ENCODE measurements at regions of chr15 and their contacts with region 1.

Region 1: DNA sequence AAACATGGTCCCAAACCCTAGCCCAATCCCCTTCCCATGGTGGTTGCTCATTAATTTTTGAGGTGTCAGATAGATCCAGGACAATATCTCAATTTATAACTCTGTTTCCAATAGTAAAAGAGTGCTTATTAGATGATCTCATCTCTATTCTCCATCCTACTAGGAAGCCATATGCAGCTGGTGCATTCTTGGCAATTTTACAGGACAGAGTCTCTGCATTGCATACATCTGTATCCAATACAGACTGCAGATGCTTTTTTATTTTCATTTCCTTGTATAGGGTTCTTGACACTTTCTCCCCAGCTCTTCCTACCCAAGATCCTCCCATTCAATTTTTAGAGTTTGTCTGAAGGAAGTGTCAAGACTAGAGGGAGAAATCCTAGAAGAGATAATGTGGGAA is 194.8 kb upstream of the DPH6 start:
- DNase-seq: no peak
- ATAC-seq: no peak
- H3K4me3 ChIP-seq: no peak overlapping the region
- H3K27ac ChIP-seq: no peak overlapping the region
- H3K4me1 ChIP-seq: no peaks in the 10 kb centered on the region
- H3K27me3 ChIP-seq: no peaks in the 10 kb centered on the region

Region 2: DNA sequence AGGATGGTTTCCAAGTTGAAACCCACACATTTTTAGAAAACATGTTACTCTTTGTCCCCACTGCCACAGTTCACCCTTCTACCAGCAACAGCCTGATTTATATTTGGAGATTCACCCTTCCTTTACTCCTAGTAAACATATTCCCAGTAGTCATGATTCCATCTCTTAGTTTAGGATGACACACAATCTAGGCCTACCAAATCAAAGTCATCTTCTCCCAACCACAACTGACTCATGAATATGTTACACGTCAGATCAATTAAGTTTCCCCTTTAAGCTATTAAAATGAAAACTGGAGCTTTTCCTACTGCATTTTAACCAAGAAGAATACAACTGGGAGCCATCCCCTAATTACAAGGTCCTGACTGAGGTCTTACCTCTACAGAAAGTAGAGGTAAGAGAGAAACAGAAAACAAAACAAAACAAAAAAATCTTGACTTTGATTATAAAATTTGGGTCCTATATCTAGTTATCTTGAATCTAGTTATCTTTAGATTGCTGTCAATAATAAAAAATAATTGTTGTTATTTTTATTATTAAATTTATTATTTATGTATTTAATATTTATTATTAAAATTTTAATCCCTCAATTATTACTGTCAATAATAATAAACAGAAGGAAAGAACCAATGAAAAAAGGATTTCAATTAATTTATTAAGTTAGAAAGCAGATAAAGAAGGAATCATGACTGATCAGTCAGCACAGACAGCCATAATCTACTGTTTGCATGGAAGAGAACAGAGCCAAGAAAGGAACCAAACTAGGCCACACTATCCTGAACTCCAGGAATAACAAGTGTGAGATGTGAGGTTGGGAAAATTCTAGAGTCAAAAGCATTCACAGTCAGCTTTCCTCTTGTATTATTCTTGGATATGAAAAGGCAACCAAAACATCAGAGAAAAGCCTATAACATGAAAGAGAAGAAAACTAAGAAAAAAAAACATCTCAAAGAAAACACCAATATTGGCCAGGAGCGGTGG is 207.3 kb before region 1 on chr15:
- intact Hi-C with region 1: loop called in 1 of 4 experiments (anchors 10 kb)
- DNase-seq: no peak
- ATAC-seq: peak; percentile 57
- H3K4me3 ChIP-seq: no peak overlapping the region
- H3K27ac ChIP-seq: no peak overlapping the region
- H3K4me1 ChIP-seq: no peaks in the 10 kb centered on the region
- H3K27me3 ChIP-seq: no peaks in the 10 kb centered on the region

Region 3: GRCh38 chr15:35680951-35681350 is 59.8 kb before region 1 on chr15:
- intact Hi-C with region 1: no loop called
- DNase-seq: no peak
- ATAC-seq: no peak
- H3K4me3 ChIP-seq: no peak overlapping the region
- H3K27ac ChIP-seq: no peak overlapping the region
- H3K4me1 ChIP-seq: peaks cover 1% of the 10 kb centered on the region
- H3K27me3 ChIP-seq: no peaks in the 10 kb centered on the region

Region 4: GRCh38 chr15:36080759-36081158 is 340.0 kb after region 1 on chr15:
- intact Hi-C with region 1: no loop called
- DNase-seq: peak; percentile 18 to 71 (median 63)
- ATAC-seq: peak; percentile 53 to 78
- H3K4me3 ChIP-seq: no peak overlapping the region
- H3K27ac ChIP-seq: no peak overlapping the region
- H3K4me1 ChIP-seq: no peaks in the 10 kb centered on the region
- H3K27me3 ChIP-seq: no peaks in the 10 kb centered on the region